ENCODE measurements at regions of chr11 and their contacts with region 1.

Region 1: GRCh38 chr11:14300661-14301304 is 58.2 kb downstream of the RRAS2 start:
- H3K4me3 Mint-ChIP-seq: no peak overlapping the region
- H3K27ac Mint-ChIP-seq: no peak overlapping the region
- H3K4me1 Mint-ChIP-seq: no peaks in the 10 kb centered on the region
- H3K27me3 Mint-ChIP-seq: peaks cover 2% of the 10 kb centered on the region

Region 2: GRCh38 chr11:14386895-14387480 is 86.2 kb after region 1 on chr11:
- intact Hi-C with region 1: no loop called
- H3K4me3 Mint-ChIP-seq: no peak overlapping the region
- H3K27ac Mint-ChIP-seq: no peak overlapping the region
- H3K4me1 Mint-ChIP-seq: no peaks in the 10 kb centered on the region
- H3K27me3 Mint-ChIP-seq: peaks cover 22% of the 10 kb centered on the region

Region 3: DNA sequence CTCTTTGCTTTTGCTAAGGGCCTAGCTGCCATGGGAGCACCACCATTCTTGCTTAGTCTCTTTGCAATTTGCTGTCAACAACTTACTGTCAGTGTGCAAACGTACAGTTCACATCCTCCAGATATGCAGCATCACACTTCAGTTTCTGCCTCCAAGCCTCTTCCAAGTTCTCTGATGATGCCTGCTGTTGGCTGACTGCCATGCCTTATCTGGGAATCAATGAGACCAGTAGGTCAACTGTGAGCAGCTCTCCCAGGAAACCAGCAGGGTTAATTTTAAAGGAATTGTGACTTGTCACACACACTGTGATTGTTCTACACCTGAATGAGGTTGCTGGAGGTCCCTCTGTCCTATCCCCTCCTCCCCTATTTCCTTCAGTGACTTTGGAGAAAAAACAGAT is 142.9 kb after region 1 on chr11:
- intact Hi-C with region 1: loop called (anchors 10 kb)
- H3K4me3 Mint-ChIP-seq: no peak overlapping the region
- H3K27ac Mint-ChIP-seq: no peak overlapping the region
- H3K4me1 Mint-ChIP-seq: peaks cover 5% of the 10 kb centered on the region
- H3K27me3 Mint-ChIP-seq: no peaks in the 10 kb centered on the region